Activated B cell treated with CpG ODN at 0.5 μM for 24 hours (primary cell): ENCODE measurements at regions of chr12 and their contacts with region 1.

Region 1: GRCh38 chr12:100142851-100143559 is at the start of gene BLTP3B:
- DNase-seq: peak; percentile 85
- ATAC-seq: peak; percentile 93
- H3K4me3 Mint-ChIP-seq: peak within 1 kb of the TSS; percentile 92
- H3K27ac Mint-ChIP-seq: peak within 1 kb of the TSS; percentile 93
- H3K4me1 Mint-ChIP-seq: peaks cover 41% of the 10 kb centered on the region
- H3K27me3 Mint-ChIP-seq: no peaks in the 10 kb centered on the region
- CTCF ChIP-seq: no peak
- total RNA-seq, gene BLTP3B: 22.3 and 22.5 TPM in 2 replicates

Region 2: GRCh38 chr12:100154474-100155247 is 11.7 kb after region 1 on chr12:
- CTCF ChIA-PET with region 1: interaction called, 6 read pairs
- POLR2A ChIA-PET with region 1: interaction called, 7 read pairs
- intact Hi-C with region 1: loop called (anchors 1 kb)
- DNase-seq: peak; percentile 57
- ATAC-seq: peak; percentile 72
- H3K4me3 Mint-ChIP-seq: no peak overlapping the region
- H3K27ac Mint-ChIP-seq: no peak overlapping the region
- H3K4me1 Mint-ChIP-seq: peaks cover 5% of the 10 kb centered on the region
- H3K27me3 Mint-ChIP-seq: no peaks in the 10 kb centered on the region
- CTCF ChIP-seq: no peak

Region 3: DNA sequence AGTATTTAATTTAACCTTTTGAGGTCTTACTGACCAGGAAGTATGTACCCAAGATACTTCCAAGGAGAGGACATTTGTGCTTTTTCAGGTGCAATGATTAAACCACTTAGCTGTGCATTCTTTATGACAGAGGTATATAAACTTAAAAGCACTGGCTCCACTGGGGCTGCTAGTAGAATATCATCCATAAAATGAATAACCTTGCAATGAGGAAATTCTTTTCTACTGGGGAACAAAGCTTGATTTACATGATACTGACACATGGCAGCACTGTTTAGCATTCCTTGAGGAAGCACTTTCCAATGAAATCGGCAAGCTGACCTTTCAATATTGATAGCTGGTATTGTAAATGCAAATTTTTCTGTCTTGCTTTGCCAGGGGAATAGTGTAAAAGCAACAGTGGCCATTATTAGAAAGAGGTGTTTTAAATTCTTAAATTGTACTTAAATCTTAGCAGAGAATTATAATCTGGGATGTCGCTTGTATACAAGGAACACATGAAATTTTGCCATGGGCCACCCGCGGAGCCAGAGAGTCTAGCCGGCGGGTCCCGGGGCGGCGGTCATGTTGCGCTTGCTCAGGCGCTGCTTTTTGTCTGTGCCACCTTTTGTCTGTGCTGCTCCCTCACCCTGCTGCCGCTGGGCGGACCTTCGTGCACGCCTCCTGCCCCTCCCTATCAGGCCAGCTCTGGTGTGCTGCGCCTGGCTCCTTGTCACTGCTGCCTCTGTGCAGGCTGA is 20.6 kb after region 1 on chr12:
- CTCF ChIA-PET with region 1: no interaction called
- POLR2A ChIA-PET with region 1: no interaction called
- intact Hi-C with region 1: loop called (anchors 1 kb)
- DNase-seq: peak; percentile 42
- ATAC-seq: peak; percentile 100
- H3K4me3 Mint-ChIP-seq: peak overlapping the region; percentile 74
- H3K27ac Mint-ChIP-seq: no peak overlapping the region
- H3K4me1 Mint-ChIP-seq: peaks cover 11% of the 10 kb centered on the region
- H3K27me3 Mint-ChIP-seq: no peaks in the 10 kb centered on the region
- CTCF ChIP-seq: no peak

Region 4: GRCh38 chr12:100225491-100225890 is 82.5 kb after region 1 on chr12:
- CTCF ChIA-PET with region 1: no interaction called
- POLR2A ChIA-PET with region 1: interaction called, 10 read pairs
- intact Hi-C with region 1: no loop called
- DNase-seq: no peak
- ATAC-seq: no peak
- H3K4me3 Mint-ChIP-seq: no peak overlapping the region
- H3K27ac Mint-ChIP-seq: no peak overlapping the region
- H3K4me1 Mint-ChIP-seq: no peaks in the 10 kb centered on the region
- H3K27me3 Mint-ChIP-seq: no peaks in the 10 kb centered on the region
- CTCF ChIP-seq: no peak

Region 5: DNA sequence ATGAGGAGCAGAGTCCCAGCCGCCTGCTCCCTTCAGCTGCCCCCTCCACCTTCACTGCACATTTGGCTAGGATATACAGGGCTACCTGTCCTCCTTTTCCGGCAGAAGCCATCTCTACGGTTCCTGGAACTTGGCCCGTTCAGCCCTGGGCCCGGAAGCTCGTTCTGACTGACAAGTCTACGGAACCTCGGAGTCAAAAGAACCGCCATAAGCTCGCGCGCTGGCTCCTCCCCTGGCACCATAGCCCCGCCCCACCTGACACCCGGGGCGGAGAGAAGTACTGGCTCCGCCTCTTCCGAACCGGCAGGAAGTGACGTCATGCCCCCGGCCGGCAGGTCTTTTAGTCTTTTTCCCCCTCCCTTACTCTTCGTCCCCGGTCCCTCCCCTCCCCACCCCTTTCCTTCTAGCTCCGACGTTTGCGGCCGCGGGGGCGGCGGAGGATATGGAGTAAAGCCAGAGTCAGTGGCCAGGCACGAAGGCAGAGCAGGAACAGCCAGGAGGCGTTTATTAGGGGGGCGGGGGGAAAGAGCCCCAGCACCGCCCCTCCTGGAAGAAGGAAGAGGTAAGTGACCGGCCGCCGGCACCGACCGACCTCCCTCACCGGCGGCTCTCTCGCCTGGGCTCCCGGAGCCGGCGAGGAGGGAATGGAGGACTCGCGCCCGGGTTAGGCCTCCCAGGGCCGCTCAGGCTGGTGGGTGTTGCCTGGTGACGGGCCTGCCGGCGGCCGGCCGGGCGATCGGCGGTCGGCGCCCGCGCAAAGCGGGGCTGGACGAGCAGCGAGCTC is 124.0 kb after region 1 on chr12 and contains the starts of genes DEPDC4 and SCYL2:
- CTCF ChIA-PET with region 1: no interaction called
- POLR2A ChIA-PET with region 1: interaction called, 3 read pairs
- intact Hi-C with region 1: loop called (anchors 1 kb)
- DNase-seq: peak; percentile 90
- ATAC-seq: peak; percentile 93
- H3K4me3 Mint-ChIP-seq: peak within 1 kb of the TSS; percentile 99
- H3K27ac Mint-ChIP-seq: peak within 1 kb of the TSS; percentile 95
- H3K4me1 Mint-ChIP-seq: peaks cover 34% of the 10 kb centered on the region
- H3K27me3 Mint-ChIP-seq: no peaks in the 10 kb centered on the region
- CTCF ChIP-seq: no peak
- total RNA-seq, gene DEPDC4: 0.49 and 0.81 TPM in 2 replicates
- total RNA-seq, gene SCYL2: 34.7 and 38.7 TPM in 2 replicates

Region 6: DNA sequence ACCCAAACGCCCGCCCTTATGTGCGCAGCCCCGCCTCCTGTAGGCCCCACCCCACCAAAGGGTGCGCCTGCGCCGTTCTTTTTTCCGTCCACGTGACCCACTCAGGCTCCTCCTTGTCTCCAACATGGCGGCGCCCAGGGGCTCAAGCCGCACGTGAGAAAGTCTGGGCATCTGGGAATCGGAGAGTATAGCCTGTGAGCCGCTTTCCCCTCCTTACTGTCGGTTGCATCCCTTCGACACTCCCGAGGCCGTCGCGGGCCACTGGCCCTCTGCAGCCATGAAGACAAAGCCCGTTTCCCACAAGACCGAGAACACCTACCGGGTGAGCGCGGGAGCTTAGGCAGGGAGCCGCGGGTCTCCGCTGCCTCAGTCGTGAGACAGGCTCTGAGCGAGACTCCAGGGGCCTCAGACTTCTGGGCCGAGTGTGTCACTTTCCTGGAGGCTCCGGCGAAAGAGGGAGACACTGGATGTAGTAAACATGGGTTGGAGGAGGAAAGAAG is 1137.1 kb after region 1 on chr12 and contains the start of gene UTP20:
- CTCF ChIA-PET with region 1: no interaction called
- POLR2A ChIA-PET with region 1: no interaction called
- intact Hi-C with region 1: loop called (anchors 1 kb)
- DNase-seq: peak; percentile 92
- ATAC-seq: peak; percentile 100
- H3K4me3 Mint-ChIP-seq: peak within 1 kb of the TSS; percentile 96
- H3K27ac Mint-ChIP-seq: peak within 1 kb of the TSS; percentile 88
- H3K4me1 Mint-ChIP-seq: peaks cover 8% of the 10 kb centered on the region
- H3K27me3 Mint-ChIP-seq: peaks cover 18% of the 10 kb centered on the region
- CTCF ChIP-seq: no peak
- total RNA-seq, gene UTP20: 26.1 and 32.9 TPM in 2 replicates